ENCODE measurements at regions of chr2 and their contacts with region 1.

Region 1: GRCh38 chr2:168920504-168921157 is 19.5 kb downstream of the G6PC2 start:
- DNase-seq: peak; percentile 77

Region 2: DNA sequence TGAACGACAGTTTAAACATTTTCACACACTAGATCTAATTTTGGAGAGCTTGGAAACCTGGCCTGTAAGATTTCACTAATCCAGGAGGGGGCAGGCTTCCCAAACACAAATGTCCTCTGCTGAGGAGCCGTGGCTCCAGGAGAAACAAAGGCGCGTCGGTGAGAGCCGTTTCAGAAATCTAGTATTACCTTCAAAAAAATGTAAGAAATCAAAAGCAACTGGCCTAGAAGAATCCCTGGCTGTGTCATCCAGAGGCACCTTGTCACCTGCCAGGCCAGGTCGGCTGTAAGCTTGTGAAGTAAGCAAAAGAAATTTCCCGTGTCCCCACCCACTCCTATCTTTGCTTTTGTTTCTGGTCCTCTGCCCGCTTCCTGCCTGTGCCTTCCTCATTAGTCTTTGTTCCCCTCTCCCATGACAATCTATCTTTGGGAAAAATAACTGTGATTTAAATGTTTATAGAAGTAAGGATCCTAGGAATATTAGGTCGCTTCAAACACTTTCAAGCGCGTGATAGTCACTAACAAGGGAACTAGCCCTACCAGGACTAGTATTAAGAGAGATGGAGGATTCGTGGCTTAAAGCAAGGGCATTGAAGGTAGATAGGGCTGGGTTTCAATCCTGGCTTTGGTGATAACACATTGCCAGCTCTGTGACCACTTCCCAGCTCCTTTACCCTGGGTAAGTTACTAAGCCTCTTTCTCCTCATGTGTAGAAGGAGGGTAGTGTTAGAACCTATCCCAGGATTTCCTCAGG is 573.7 kb before region 1 on chr2:
- in situ Hi-C with region 1: loop called (anchors 25 kb)
- DNase-seq: peak; percentile 87

Region 3: DNA sequence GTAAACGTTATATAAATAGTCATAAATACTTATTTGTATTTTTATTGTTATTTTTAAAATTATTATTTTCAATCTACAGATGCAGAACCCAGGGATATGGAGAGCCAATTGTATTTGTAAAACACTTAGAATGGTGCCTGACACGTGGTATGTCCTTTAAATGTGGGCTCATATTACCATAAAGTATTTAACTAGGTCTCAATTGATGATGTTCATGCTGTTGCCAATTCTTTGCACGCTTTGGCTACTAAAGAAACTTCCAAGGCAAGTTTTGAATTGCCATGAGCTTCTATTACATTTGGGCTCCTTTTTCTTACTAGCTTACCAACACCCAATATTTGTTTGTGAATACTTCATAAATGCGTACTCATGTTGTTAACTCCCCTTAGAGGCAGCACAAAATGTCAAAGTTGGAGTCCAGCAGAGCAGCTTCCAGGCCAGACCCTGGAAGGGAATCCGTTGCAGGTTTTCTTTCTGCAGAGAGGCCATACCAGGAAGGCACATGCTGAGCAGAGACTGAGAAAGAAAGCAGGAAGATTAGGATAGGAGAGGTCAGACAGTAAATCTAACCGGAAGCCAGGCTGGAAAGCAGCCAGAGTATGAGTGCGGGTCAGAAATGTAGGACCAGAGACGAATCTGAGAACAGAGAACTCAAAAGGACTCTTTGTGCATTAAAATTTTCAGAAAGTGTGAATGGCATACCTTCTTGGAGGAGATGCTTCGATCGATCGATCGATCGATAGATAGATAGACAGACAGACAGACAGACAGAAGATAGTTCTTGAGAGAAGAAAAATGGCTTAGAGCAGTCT is 122.3 kb before region 1 on chr2:
- in situ Hi-C with region 1: loop called (anchors 25 kb)
- DNase-seq: peak; percentile 55

Region 4: DNA sequence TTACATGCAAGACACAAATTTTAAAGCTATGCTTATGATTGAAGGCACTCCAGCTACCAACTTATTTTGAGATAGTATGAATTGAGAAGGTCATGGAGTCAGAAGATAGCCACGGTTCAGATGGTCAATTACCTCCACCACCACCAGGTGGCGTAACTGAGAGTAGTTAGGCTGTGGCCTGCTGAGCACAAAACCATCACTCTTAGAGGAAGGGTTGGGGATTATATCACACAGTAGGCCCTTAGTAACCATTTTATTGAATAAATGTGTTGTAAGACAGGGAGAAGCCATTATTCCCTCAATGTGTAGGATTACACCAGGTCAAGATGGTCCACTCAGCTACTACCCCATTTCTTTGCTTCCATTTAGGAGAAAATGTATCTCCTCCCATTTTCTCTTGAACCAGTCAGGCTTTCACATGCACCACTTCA is 607.7 kb after region 1 on chr2:
- in situ Hi-C with region 1: no loop called
- DNase-seq: peak; percentile 81

Measured in KBM-7 (cell line).